Right ventricle myocardium superior (tissue), 1 donor: ENCODE measurements at regions of chr4 and their contacts with region 1.

Region 1: DNA sequence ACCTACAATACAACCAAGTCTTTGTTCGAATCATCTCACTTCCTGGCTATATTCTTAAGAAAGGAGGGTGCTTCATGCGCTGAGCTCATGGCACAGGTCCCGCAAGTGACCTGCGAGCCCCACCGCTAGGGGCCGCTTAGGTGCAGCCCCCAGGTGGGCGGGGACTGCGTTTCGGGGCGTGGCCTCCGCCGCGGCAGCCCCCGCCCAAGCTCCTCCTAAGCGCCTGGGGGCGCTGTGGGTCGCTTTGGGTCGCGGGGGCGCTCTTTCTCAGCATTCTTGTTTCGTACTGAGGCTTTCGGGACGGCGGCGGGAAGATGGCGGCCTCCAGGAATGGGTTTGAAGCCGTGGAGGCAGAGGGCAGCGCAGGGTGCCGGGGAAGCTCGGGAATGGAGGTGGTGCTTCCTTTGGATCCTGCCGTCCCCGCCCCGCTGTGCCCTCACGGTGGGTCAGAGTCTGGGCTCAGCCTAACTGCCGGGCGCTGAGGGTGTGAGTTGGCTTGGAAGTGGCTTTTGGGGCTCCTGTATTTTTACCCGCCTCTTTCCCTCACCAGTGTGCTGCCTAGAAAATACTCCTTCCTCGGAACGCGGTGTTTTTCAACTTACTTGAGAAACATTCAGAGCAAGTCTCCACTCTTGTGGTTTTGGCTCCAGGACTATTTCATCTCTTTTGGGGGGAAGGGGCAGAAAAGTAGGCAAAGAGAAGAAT is at the start of gene ZCCHC4:
- DNase-seq: peak; percentile 93
- ATAC-seq: peak; percentile 99
- total RNA-seq, gene ZCCHC4: 9.2 TPM

Region 2: DNA sequence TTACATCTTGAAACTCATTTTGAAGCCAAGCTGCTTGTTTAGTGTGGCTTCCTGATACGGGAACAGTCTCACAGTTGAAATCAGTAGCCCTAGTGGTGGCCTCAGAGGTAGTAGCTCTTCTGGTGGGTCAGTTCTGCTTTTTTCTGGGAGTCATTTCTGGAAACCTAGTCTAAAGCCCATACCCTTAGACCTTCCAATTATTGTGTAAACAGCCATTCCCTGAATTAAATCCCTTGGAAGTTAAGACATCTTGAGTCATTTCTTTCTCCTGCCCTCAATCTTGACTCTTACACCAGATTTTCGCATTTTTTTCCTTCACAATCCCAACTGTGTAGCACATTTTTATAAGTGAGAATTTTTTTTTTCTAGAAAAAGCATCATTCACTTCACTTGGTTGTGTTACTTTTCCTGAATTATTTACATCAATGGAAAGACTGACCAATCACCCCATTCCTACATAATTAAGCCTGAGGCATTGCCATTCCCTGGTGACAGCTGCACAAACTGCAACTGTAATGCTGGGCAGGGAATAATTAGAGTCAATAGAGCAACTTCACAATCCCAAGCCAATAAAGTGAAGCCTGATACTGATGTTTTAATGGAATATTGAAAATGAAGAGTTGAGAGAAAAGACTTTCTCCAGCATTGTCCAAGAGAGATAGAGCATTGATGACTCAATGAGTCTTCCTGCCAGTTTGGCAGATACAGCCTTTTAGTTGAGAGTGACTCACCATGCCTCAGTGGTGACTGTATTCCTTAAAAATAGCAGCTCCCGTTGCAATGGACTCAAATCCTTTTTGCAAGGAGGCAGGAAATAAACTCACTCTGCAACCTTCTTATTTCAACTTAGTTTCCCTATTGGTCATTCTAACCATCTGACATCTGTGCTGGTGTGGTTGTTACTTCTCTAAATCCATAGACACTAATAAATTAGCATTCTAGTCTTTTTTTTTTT is 139.4 kb before region 1 on chr4:
- intact Hi-C with region 1: loop called (anchors 10 kb)
- DNase-seq: no peak
- ATAC-seq: peak; percentile 98

Region 3: GRCh38 chr4:25654971-25655963 is 342.6 kb after region 1 on chr4 and contains the start of gene SLC34A2:
- intact Hi-C with region 1: no loop called
- DNase-seq: no peak
- ATAC-seq: no peak
- total RNA-seq, gene SLC34A2: 0.11 TPM